MCF 10A (cell line): ENCODE measurements at regions of chr5 and their contacts with region 1.

Region 1: DNA sequence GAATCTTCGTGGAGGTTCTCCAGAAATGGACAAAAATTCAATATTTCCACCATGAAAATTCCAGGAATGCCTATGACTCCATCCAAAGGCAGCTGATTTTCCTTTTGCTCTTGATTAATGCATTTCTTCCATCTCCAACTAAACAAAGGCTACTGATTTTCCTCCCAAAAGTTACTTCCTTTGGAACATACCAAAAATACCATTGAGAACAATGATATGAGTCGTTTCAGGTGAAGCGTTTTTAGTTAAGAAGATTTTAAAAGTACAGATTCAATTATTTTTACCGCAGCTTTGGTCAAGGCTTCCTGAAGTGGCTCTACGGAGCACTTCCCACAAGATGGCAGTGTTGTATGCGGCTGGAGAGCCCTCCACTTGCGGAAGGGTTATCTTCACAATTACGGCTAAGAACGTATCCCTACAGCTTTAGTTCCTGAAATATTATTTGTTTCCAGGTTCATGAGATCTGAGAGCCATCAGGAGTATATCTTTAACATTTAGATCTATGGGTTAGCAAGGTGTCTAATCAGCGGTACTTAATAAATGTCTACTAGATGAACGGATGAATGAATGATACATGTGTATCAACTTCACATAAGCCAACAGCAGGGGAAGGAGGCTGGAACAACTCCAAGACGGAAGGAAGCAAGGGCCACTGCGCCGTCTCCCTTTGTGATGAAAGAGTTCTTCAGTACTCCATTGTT is 35.9 kb upstream of the ARSB start:
- DNase-seq: peak; percentile 59
- H3K4me3 Mint-ChIP-seq: no peak overlapping the region
- H3K27ac Mint-ChIP-seq: no peak overlapping the region
- H3K4me1 Mint-ChIP-seq: peaks cover 11% of the 10 kb centered on the region
- H3K27me3 Mint-ChIP-seq: peaks cover 11% of the 10 kb centered on the region
- CTCF ChIP-seq: peak; percentile 74

Region 2: GRCh38 chr5:78824831-78825281 is 196.2 kb before region 1 on chr5:
- CTCF ChIA-PET with region 1: no interaction called
- POLR2A ChIA-PET with region 1: no interaction called
- intact Hi-C with region 1: no loop called
- DNase-seq: no peak
- H3K4me3 Mint-ChIP-seq: no peak overlapping the region
- H3K27ac Mint-ChIP-seq: no peak overlapping the region
- H3K4me1 Mint-ChIP-seq: no peaks in the 10 kb centered on the region
- H3K27me3 Mint-ChIP-seq: no peaks in the 10 kb centered on the region
- CTCF ChIP-seq: no peak

Region 3: GRCh38 chr5:78953092-78953800 is 67.8 kb before region 1 on chr5:
- CTCF ChIA-PET with region 1: no interaction called
- POLR2A ChIA-PET with region 1: no interaction called
- intact Hi-C with region 1: no loop called
- DNase-seq: no peak
- H3K4me3 Mint-ChIP-seq: no peak overlapping the region
- H3K27ac Mint-ChIP-seq: no peak overlapping the region
- H3K4me1 Mint-ChIP-seq: no peaks in the 10 kb centered on the region
- H3K27me3 Mint-ChIP-seq: no peaks in the 10 kb centered on the region
- CTCF ChIP-seq: no peak

Region 4: GRCh38 chr5:78997090-78997489 is 23.9 kb before region 1 on chr5:
- CTCF ChIA-PET with region 1: interaction called, 14 read pairs
- POLR2A ChIA-PET with region 1: interaction called, 3 read pairs
- intact Hi-C with region 1: no loop called
- DNase-seq: no peak
- H3K4me3 Mint-ChIP-seq: no peak overlapping the region
- H3K27ac Mint-ChIP-seq: no peak overlapping the region
- H3K4me1 Mint-ChIP-seq: peaks cover 9% of the 10 kb centered on the region
- H3K27me3 Mint-ChIP-seq: no peaks in the 10 kb centered on the region
- CTCF ChIP-seq: no peak

Region 5: GRCh38 chr5:79048437-79048836 is 27.4 kb after region 1 on chr5:
- CTCF ChIA-PET with region 1: interaction called, 18 read pairs
- POLR2A ChIA-PET with region 1: no interaction called
- intact Hi-C with region 1: no loop called
- DNase-seq: no peak
- H3K4me3 Mint-ChIP-seq: no peak overlapping the region
- H3K27ac Mint-ChIP-seq: no peak overlapping the region
- H3K4me1 Mint-ChIP-seq: no peaks in the 10 kb centered on the region
- H3K27me3 Mint-ChIP-seq: no peaks in the 10 kb centered on the region
- CTCF ChIP-seq: no peak

Region 6: DNA sequence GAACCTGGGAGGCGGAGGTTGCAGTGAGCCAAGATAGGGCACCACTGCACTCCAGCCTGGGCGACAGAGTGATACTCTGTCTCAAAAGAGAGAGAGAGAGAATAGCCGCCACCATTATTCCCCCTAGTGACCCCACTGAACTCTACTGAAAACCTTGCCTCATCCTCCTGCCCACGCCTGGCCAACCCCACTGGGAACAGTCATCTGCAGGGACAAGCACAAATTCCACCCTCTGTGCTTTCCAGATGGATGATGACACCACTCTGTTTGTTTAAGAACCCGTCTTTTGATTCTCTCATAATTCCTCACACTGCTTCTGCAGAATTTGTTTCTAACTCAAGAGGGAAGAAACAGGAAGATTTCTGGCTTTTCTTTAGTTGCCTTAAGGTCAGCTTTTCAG is 60.8 kb after region 1 on chr5:
- CTCF ChIA-PET with region 1: interaction called, 14 read pairs
- POLR2A ChIA-PET with region 1: interaction called, 3 read pairs
- intact Hi-C with region 1: no loop called
- DNase-seq: no peak
- H3K4me3 Mint-ChIP-seq: no peak overlapping the region
- H3K27ac Mint-ChIP-seq: no peak overlapping the region
- H3K4me1 Mint-ChIP-seq: no peaks in the 10 kb centered on the region
- H3K27me3 Mint-ChIP-seq: no peaks in the 10 kb centered on the region
- CTCF ChIP-seq: no peak

Region 7: GRCh38 chr5:79133657-79134451 is 112.8 kb after region 1 on chr5:
- CTCF ChIA-PET with region 1: interaction called, 491 read pairs
- POLR2A ChIA-PET with region 1: interaction called, 21 read pairs
- intact Hi-C with region 1: loop called (anchors 1 kb)
- DNase-seq: peak; percentile 84
- H3K4me3 Mint-ChIP-seq: peak overlapping the region; percentile 63
- H3K27ac Mint-ChIP-seq: peak overlapping the region; percentile 72
- H3K4me1 Mint-ChIP-seq: peaks cover 12% of the 10 kb centered on the region
- H3K27me3 Mint-ChIP-seq: no peaks in the 10 kb centered on the region
- CTCF ChIP-seq: peak; percentile 72

Region 8: DNA sequence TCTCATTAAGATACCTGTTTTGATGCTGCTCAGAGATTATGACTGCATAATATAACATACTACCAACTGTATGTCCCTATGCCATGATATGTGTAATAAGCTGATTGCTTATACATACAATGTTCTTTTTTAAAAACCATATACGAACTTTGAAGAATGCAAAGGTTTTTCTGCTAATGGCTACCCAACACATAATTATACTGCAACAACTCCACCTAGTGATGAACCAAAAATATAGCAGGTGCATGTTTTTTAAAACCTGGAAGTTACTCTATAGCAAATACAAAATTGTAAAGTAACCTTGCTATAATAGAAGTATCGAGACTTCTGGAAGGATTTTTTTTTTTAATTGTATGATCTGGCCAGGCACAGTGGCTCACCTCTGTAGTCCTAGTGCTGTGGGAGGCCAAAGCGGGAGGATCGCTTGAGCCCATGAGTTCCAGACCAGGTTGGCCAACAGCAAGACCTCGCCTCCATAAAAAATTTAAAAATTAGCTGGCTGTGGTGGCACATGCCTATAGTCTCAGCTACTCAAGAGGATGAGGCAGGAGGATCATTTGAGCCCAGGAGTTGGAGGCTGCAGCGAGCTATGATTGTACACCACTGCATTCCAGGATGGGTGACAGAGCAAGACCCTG is 443.8 kb after region 1 on chr5:
- CTCF ChIA-PET with region 1: interaction called, 77 read pairs
- POLR2A ChIA-PET with region 1: interaction called, 5 read pairs
- intact Hi-C with region 1: loop called (anchors 1 kb)
- DNase-seq: peak; percentile 31
- H3K4me3 Mint-ChIP-seq: no peak overlapping the region
- H3K27ac Mint-ChIP-seq: no peak overlapping the region
- H3K4me1 Mint-ChIP-seq: no peaks in the 10 kb centered on the region
- H3K27me3 Mint-ChIP-seq: no peaks in the 10 kb centered on the region
- CTCF ChIP-seq: peak; percentile 58

Region 9: GRCh38 chr5:80083101-80083890 is 1062.3 kb after region 1 on chr5:
- CTCF ChIA-PET with region 1: interaction called, 6 read pairs
- POLR2A ChIA-PET with region 1: no interaction called
- intact Hi-C with region 1: loop called (anchors 1 kb)
- DNase-seq: peak; percentile 82
- H3K4me3 Mint-ChIP-seq: peak overlapping the region; percentile 74
- H3K27ac Mint-ChIP-seq: peak overlapping the region; percentile 67
- H3K4me1 Mint-ChIP-seq: peaks cover 11% of the 10 kb centered on the region
- H3K27me3 Mint-ChIP-seq: no peaks in the 10 kb centered on the region
- CTCF ChIP-seq: peak; percentile 60